ENCODE measurements at regions of chr21 and their contacts with region 1.

Region 1: DNA sequence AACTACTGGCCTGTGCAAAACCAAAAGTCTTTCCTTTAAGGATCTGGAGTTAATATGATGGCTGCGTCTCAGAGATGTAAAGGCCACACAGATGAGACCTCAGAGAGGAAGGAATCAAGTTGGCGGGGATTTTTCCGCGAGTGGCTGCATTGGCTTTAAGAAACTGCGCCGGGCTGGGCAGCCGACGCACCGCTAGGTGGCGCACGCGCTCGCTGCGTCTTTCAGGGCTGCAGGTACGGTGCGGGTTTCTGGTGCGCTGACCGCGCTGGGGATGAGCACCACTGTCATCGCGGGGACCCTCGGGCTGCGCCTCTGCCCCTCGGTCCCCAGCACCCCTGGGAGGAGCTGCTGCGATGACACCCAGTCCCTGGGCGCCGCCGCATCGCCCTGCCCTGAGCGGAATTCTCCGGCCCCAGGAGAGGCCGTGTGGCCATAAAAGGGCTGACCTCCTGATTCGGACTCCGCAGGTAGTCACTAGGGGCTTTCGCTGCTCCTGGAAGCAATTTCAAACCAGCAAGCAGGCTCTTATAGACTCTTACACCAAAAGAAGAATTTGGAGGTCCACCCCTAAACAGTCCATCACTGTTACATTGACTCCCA is 241.0 kb downstream of the KCNJ6 start:
- DNase-seq: peak; percentile 18 to 65 (median 48)
- ATAC-seq: no peak
- H3K4me3 ChIP-seq: no peak overlapping the region
- H3K4me3 Mint-ChIP-seq: no peak overlapping the region
- H3K27ac ChIP-seq: no peak overlapping the region
- H3K27ac Mint-ChIP-seq: no peak overlapping the region
- H3K4me1 ChIP-seq: no peaks in the 10 kb centered on the region
- H3K4me1 Mint-ChIP-seq: peaks cover 3% of the 10 kb centered on the region
- H3K27me3 ChIP-seq: no peaks in the 10 kb centered on the region
- H3K27me3 Mint-ChIP-seq: peaks cover 34% of the 10 kb centered on the region
- CTCF ChIP-seq: peak; percentile 93

Region 2: DNA sequence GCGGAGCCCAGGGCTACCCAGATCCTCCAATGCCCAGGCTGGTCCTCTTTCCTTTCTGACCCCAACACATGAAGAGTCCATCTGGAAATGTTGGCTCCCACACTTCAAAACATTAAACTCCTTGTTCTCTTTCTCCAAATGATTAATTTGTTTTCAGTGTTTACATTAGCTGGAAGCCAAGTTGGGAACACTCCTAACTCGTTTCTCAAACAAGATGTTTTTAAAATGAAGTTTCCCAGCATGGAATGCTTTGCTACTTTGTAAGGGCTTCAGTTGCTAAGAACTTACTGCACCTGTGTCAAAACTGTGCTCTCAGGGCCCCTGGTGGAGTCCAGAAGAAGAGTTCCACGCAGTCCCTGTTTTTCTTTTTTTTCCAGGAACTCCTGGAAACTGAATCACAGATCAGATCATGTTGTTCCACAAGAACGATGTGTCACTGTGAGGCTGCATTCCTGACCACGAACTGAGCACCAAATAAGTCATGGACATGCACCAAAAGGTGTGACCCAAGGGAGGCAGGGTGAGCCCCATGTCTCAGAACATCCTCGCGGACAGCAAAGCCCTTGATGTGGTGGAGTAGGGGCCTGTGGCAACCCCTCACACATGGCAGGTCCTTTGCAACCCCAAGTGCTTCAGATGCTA is 16.4 kb before region 1 on chr21:
- CTCF ChIA-PET with region 1: interaction called, 12 read pairs
- POLR2A ChIA-PET with region 1: no interaction called
- intact Hi-C with region 1: no loop called
- DNase-seq: no peak
- ATAC-seq: no peak
- H3K4me3 ChIP-seq: no peak overlapping the region
- H3K4me3 Mint-ChIP-seq: no peak overlapping the region
- H3K27ac ChIP-seq: no peak overlapping the region
- H3K27ac Mint-ChIP-seq: no peak overlapping the region
- H3K4me1 ChIP-seq: no peaks in the 10 kb centered on the region
- H3K4me1 Mint-ChIP-seq: no peaks in the 10 kb centered on the region
- H3K27me3 ChIP-seq: no peaks in the 10 kb centered on the region
- H3K27me3 Mint-ChIP-seq: peaks cover 7% of the 10 kb centered on the region
- CTCF ChIP-seq: no peak

Region 3: DNA sequence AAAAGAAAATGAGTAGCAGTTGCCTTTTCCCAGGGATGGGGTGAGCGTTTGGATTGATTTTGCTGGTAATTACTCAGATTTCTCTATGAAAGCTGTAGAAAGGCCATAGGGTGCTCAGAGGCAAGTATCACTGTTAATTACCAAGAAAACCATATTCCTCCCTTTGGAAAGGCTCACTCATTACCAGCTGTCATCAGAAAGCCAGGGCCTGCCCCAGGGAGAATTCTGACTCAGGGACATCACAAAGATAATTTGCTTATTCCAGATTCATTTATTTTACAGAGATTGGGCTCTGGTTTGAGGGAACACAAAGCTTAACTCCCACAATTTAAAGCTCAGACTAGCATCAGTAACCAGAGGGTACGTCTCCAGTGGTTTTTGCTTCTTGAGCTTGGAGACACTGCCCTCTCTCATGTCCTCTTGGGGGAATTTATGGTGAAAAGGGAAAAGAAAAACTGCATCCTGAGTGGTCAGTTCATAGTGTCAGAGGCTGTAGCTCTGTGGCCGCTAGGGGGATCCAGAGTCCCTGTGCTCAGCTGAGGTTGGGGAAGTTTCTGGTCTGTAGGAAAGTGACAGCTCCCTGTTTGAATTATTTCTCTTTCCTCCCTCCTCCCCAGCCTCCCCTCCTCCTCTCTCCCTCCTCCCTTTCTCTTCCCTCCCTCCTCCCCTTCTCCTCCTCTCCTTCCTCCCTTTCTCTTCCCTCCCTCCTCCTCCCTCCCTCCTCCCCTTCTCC is 36.7 kb after region 1 on chr21:
- CTCF ChIA-PET with region 1: no interaction called
- POLR2A ChIA-PET with region 1: no interaction called
- intact Hi-C with region 1: no loop called
- DNase-seq: peak in 3 of 9 experiments; percentile 22 to 39 (median 31)
- ATAC-seq: no peak
- H3K4me3 ChIP-seq: no peak overlapping the region
- H3K4me3 Mint-ChIP-seq: no peak overlapping the region
- H3K27ac ChIP-seq: no peak overlapping the region
- H3K27ac Mint-ChIP-seq: no peak overlapping the region
- H3K4me1 ChIP-seq: no peaks in the 10 kb centered on the region
- H3K4me1 Mint-ChIP-seq: no peaks in the 10 kb centered on the region
- H3K27me3 ChIP-seq: no peaks in the 10 kb centered on the region
- H3K27me3 Mint-ChIP-seq: peaks cover 38% of the 10 kb centered on the region
- CTCF ChIP-seq: peak; percentile 25